ENCODE measurements at regions of chr2 and their contacts with region 1.

Region 1: DNA sequence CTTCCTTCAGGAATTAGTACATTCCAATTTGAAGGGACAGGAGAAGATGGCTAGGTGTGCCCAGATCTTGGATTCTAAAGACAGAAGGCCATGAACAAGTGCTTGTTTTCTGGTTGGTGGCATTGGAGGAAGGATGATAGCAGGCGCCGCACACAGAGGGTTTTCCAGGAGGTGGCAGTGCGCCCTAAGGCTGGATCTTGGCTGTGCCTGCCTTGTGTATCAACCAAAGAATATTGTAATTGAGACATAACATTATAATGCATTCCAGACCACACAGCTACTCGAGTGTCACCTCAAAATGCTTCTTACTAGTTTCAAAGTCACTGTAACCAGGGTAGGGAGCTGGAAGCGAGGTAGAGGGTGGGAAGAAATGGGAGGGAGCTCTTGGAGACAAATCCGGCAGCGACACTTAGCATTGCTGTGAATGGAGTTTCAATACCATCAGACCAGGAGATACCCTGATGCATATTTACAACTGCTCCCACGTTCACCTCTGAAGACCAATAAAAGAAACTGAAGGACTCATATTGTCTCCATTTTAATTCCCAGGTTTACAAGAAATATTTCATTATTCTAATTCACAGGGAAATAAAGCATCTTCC is 42.5 kb downstream of the CPO start:
- DNase-seq: peak; percentile 68
- H3K4me3 ChIP-seq: no peak overlapping the region; a peak in 1 of 4 replicates
- H3K27ac ChIP-seq: peak overlapping the region in 1 of 2 experiments; percentile 91; a peak in 2 of 4 replicates
- H3K4me1 ChIP-seq: peaks cover 4 to 37% of the 10 kb centered on the region in 2 experiments; a peak in 3 of 4 replicates
- H3K27me3 ChIP-seq: no peaks in the 10 kb centered on the region
- CTCF ChIP-seq: peak; percentile 95
- EP300 ChIP-seq: peak in 1 of 2 experiments; percentile 53; a peak in 1 of 4 replicates
- RAD21 ChIP-seq: peak; percentile 99

Region 2: GRCh38 chr2:206721256-206721920 is 260.5 kb before region 1 on chr2:
- CTCF ChIA-PET with region 1: no interaction called
- POLR2A ChIA-PET with region 1: no interaction called
- DNase-seq: no peak
- H3K4me3 ChIP-seq: no peak overlapping the region
- H3K27ac ChIP-seq: no peak overlapping the region
- H3K4me1 ChIP-seq: peaks cover 0 to 7% of the 10 kb centered on the region in 2 experiments; a peak in 1 of 4 replicates
- H3K27me3 ChIP-seq: no peaks in the 10 kb centered on the region
- CTCF ChIP-seq: no peak
- EP300 ChIP-seq: no peak
- RAD21 ChIP-seq: no peak

Region 3: GRCh38 chr2:206968134-206969086 is 13.4 kb before region 1 on chr2:
- CTCF ChIA-PET with region 1: interaction called, 11 read pairs
- POLR2A ChIA-PET with region 1: no interaction called
- DNase-seq: no peak
- H3K4me3 ChIP-seq: no peak overlapping the region
- H3K27ac ChIP-seq: no peak overlapping the region
- H3K4me1 ChIP-seq: no peaks in the 10 kb centered on the region; a peak in 1 of 4 replicates
- H3K27me3 ChIP-seq: no peaks in the 10 kb centered on the region
- CTCF ChIP-seq: no peak
- EP300 ChIP-seq: no peak
- RAD21 ChIP-seq: no peak

Region 4: DNA sequence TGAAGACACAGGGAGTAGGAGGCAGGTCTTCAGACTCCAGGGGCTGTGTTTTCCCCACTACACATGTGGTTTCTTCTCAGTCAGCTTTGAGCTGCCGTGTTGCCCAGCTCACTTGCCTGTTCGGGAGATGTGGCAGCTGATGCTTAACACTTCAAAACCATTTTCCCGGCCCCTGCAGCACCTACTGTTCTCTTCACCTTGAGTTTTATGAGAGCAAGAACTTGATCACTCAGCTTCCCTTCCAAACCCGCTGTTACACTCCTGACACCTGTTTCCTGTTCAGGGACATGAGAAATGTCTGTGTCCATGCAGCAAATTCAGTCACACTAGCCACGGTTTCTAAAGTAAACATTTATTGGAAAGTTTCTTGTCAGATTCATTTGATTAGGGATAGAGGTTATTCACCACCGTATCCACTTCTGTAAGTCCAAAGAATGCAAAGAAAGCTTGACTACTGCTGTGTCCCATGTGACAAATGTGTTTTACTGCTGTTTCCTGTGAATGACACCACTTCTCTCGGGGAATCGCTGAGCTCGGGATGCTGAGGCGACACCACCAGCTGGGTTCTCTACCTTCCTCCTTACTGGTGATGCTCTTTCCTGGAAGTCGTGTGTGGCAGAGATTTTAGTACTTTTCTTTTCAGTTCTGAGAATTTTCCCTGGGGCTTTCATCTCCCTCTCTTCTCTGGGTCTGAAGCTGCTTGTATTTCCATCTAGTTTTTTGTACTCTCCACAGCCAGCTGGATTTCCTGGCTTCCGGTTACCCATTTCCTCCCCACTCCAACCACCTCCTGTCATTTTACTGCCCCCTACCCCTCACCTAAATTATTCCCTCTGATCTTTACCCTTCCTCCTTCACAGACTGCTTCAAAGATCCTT is 92.2 kb after region 1 on chr2:
- CTCF ChIA-PET with region 1: interaction called, 13 read pairs
- POLR2A ChIA-PET with region 1: interaction called, 3 read pairs
- DNase-seq: no peak
- H3K4me3 ChIP-seq: no peak overlapping the region
- H3K27ac ChIP-seq: peak overlapping the region in 1 of 2 experiments; percentile 67; a peak in 2 of 4 replicates
- H3K4me1 ChIP-seq: peaks cover 0 to 32% of the 10 kb centered on the region in 2 experiments; a peak in 3 of 4 replicates
- H3K27me3 ChIP-seq: no peaks in the 10 kb centered on the region
- CTCF ChIP-seq: no peak
- EP300 ChIP-seq: no peak
- RAD21 ChIP-seq: peak; percentile 19; the same call in 1 of the 2 replicates

Region 5: DNA sequence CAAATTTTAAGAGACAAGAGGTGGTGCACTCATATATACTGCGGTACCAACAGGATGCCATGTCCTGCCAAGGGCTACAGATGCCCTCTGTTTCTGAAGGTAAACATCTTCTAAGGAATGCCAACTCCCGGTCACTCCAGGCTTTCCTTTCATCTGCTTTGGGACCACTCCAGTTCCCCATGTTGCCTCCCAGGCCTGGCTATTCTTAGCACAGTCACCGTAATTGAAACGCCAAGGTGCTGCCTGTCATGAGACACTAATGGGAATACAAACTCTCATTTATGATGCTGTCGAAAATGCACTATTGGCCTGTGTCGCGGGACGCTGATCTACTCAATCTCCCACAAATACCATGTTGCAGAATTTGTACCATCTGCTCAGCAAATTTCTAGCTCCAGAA is 104.3 kb after region 1 on chr2:
- CTCF ChIA-PET with region 1: interaction called, 3 read pairs
- POLR2A ChIA-PET with region 1: interaction called, 12 read pairs
- DNase-seq: no peak
- H3K4me3 ChIP-seq: no peak overlapping the region
- H3K27ac ChIP-seq: peak overlapping the region in 1 of 2 experiments; percentile 99; a peak in 2 of 4 replicates
- H3K4me1 ChIP-seq: peaks cover 6 to 63% of the 10 kb centered on the region in 2 experiments; a peak in 3 of 4 replicates
- H3K27me3 ChIP-seq: no peaks in the 10 kb centered on the region
- CTCF ChIP-seq: no peak
- EP300 ChIP-seq: no peak
- RAD21 ChIP-seq: no peak

Measured in SK-N-SH (cell line).